ENCODE measurements at regions of chr12 and their contacts with region 1.

Region 1: GRCh38 chr12:56468216-56469006 is at the start of gene SPRYD4:
- DNase-seq: peak; percentile 94
- ATAC-seq: peak; percentile 87
- H3K4me3 ChIP-seq: peak within 1 kb of the TSS; percentile 97
- H3K27ac ChIP-seq: peak within 1 kb of the TSS; percentile 76
- H3K4me1 ChIP-seq: peaks cover 17% of the 10 kb centered on the region
- H3K27me3 ChIP-seq: no peaks in the 10 kb centered on the region
- CTCF ChIP-seq: peak; percentile 64
- total RNA-seq, gene SPRYD4: 3.4 and 3.7 TPM in 2 replicates

Region 2: DNA sequence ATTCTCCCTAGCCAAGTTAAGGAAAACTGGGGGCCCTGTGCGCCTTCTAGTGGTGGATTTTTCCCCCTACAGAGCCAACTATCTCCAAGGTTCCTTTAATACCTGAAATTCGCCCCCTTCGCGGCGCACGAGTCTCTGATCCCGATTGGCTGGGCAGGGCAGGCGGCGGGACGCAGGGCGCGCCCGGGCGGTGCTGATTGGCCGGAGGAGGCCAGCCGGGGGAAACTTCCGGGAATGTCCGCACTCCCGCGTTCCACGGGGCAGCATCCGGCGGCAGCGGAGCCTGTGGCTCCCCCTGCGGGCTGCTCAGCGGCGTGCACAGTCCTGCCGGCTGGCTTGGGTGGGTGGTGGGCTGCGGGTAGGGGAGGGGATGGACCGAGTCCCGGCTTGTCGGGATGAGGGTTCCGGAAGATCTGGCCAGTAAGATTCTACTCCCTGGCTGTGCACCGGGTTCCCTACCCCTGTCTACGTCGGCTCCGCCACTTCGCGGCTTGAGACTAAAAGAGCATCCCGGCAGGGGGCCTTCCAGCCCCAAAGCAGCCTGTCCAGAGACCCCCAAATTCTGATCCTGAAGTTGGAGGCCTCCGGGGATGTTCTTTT is 244.2 kb before region 1 on chr12 and contains the start of gene NABP2:
- CTCF ChIA-PET with region 1: no interaction called
- POLR2A ChIA-PET with region 1: no interaction called
- intact Hi-C with region 1: no loop called
- DNase-seq: peak; percentile 99
- ATAC-seq: peak; percentile 81
- H3K4me3 ChIP-seq: peak within 1 kb of the TSS; percentile 88
- H3K27ac ChIP-seq: peak within 1 kb of the TSS; percentile 21; the same call in 1 of the 2 replicates
- H3K4me1 ChIP-seq: peaks cover 22% of the 10 kb centered on the region
- H3K27me3 ChIP-seq: no peaks in the 10 kb centered on the region
- CTCF ChIP-seq: peak; percentile 94
- total RNA-seq, gene NABP2: 91.6 and 98.6 TPM in 2 replicates

Region 3: DNA sequence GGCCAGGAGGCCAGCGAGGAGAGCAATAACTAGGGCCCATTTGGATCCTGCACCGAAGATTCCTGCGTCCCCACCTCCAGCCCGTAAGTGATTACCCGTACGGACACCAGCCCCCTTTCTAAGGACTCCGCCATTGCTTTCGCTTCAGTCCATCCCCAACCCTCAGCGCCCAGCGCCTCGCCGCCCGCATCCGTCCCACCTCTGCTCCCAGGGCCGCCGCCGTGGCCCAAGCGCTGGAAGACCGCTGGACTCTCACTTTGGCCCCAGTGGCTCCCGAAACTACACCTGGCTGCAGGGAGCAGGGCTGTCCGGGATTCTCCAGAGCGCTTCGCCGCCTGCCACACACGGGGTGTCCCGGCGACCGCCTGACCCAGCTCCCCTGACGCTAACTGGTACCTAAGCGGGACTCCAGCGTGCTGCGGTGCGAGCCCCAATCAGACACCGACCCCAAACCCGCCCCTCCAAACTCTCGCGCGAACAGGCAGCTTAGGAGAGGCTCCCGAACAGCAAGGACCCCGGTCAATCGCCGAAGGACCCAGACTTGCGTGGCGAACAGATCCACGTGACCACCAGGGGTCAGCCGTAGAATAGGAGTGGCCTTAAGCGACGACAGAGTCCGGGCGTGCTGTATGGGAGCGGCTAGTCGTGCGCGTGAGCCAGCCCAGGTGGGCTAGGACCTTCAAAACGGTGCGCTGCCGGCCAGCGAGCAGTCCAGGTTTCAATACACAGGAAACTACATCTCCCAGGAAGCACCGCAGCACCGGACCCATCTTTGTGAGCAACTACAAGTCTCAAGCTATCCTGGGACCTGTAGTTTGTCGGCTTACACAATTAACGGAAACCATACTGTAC is 152.6 kb before region 1 on chr12 and contains the start of gene CNPY2:
- CTCF ChIA-PET with region 1: interaction called, 6 read pairs
- POLR2A ChIA-PET with region 1: no interaction called
- intact Hi-C with region 1: loop called (anchors 1 kb)
- DNase-seq: peak; percentile 98
- ATAC-seq: peak; percentile 95
- H3K4me3 ChIP-seq: peak within 1 kb of the TSS; percentile 90
- H3K27ac ChIP-seq: peak within 1 kb of the TSS; percentile 59
- H3K4me1 ChIP-seq: peaks cover 15% of the 10 kb centered on the region
- H3K27me3 ChIP-seq: no peaks in the 10 kb centered on the region
- CTCF ChIP-seq: peak; percentile 44
- total RNA-seq, gene CNPY2: 109 and 162 TPM in 2 replicates

Region 4: DNA sequence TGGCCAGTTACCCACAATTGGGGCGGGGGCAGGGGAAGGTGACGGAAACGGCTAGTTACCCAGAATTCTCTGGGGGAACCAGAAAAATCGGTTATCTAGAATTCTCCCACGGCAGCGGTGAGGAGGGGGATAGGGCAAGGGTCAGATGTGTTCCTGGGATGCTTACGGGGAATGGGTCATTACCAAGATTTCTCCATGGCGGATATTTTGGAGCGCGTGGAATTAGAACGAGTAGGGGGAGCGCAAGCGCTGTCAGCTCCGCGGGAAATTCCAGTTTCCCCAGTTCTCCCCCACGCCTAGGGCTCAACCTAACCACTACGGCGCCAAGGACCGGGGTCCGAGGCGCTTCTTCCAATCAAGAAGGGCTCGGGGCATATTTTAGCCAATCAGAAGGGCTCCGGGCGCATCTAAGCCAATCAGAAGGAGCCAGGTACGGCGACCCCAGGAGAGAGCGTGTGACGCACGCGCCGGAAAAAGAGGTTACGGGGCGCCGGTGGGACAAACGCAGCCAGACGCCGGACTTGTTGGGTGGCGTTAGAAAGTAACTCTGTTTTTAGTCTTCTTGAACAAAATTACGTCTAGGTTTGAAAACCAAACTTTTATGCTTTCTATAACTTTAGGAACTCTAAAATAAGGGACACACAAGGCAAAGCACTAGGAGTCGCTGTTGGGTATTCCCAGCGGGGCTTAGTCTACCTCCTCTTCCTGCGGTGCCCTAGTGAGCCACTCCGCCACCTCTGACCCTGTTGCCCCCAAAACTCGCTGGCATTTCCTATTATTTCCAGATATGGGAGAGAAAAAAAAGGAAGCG is 134.5 kb before region 1 on chr12 and contains the start of gene PAN2:
- CTCF ChIA-PET with region 1: no interaction called
- POLR2A ChIA-PET with region 1: no interaction called
- intact Hi-C with region 1: loop called (anchors 1 kb)
- DNase-seq: peak; percentile 98
- ATAC-seq: peak; percentile 99
- H3K4me3 ChIP-seq: peak within 1 kb of the TSS; percentile 72
- H3K27ac ChIP-seq: peak within 1 kb of the TSS; percentile 92
- H3K4me1 ChIP-seq: peaks cover 31% of the 10 kb centered on the region
- H3K27me3 ChIP-seq: no peaks in the 10 kb centered on the region
- CTCF ChIP-seq: peak; percentile 73
- total RNA-seq, gene PAN2: 15.3 and 27.1 TPM in 2 replicates

Region 5: GRCh38 chr12:56377310-56377988 is 91.0 kb before region 1 on chr12:
- CTCF ChIA-PET with region 1: interaction called, 4 read pairs
- POLR2A ChIA-PET with region 1: no interaction called
- intact Hi-C with region 1: loop called (anchors 1 kb)
- DNase-seq: peak; percentile 80
- ATAC-seq: peak; percentile 98
- H3K4me3 ChIP-seq: no peak overlapping the region
- H3K27ac ChIP-seq: no peak overlapping the region
- H3K4me1 ChIP-seq: peaks cover 10% of the 10 kb centered on the region
- H3K27me3 ChIP-seq: no peaks in the 10 kb centered on the region
- CTCF ChIP-seq: peak; percentile 66